Activated T-helper 1 cell treated with anti-CD3 and anti-CD28 coated beads, Interleukin-12 subunit alpha, Interleukin-12 subunit beta, Interleukin-2, Interleukin-4 antibody, amounts not matched to agents 30 ng/mL and 10 ng/mL and 1 ng/mL, durations not matched to agents 14 hours and 24 hours and 36 hours (primary cell): ENCODE measurements at regions of chr17 and their contacts with region 1.

Region 1: GRCh38 chr17:67959288-67959900 is 36.9 kb downstream of the C17orf58 start:
- DNase-seq: no peak
- H3K4me3 Mint-ChIP-seq: no peak overlapping the region
- H3K27ac Mint-ChIP-seq: peak overlapping the region; percentile 63
- H3K4me1 Mint-ChIP-seq: peaks cover 7% of the 10 kb centered on the region
- H3K27me3 Mint-ChIP-seq: no peaks in the 10 kb centered on the region

Region 2: GRCh38 chr17:67868176-67868575 is 91.2 kb before region 1 on chr17:
- intact Hi-C with region 1: no loop called
- DNase-seq: no peak
- H3K4me3 Mint-ChIP-seq: no peak overlapping the region
- H3K27ac Mint-ChIP-seq: no peak overlapping the region
- H3K4me1 Mint-ChIP-seq: peaks cover 23% of the 10 kb centered on the region
- H3K27me3 Mint-ChIP-seq: no peaks in the 10 kb centered on the region

Region 3: GRCh38 chr17:68011199-68011665 is 51.8 kb after region 1 on chr17:
- intact Hi-C with region 1: loop called (anchors 1 kb)
- DNase-seq: peak; percentile 49
- H3K4me3 Mint-ChIP-seq: peak overlapping the region; percentile 58
- H3K27ac Mint-ChIP-seq: no peak overlapping the region
- H3K4me1 Mint-ChIP-seq: peaks cover 6% of the 10 kb centered on the region
- H3K27me3 Mint-ChIP-seq: peaks cover 23% of the 10 kb centered on the region

Region 4: GRCh38 chr17:68613739-68614298 is 654.4 kb after region 1 on chr17:
- intact Hi-C with region 1: loop called (anchors 5 kb)
- DNase-seq: peak; percentile 30
- H3K4me3 Mint-ChIP-seq: no peak overlapping the region
- H3K27ac Mint-ChIP-seq: no peak overlapping the region
- H3K4me1 Mint-ChIP-seq: no peaks in the 10 kb centered on the region
- H3K27me3 Mint-ChIP-seq: peaks cover 29% of the 10 kb centered on the region